ENCODE measurements at regions of chr11 and their contacts with region 1.

Region 1: GRCh38 chr11:9384535-9385303 is at the start of gene IPO7:
- DNase-seq: peak; percentile 93
- H3K4me3 Mint-ChIP-seq: peak within 1 kb of the TSS; percentile 92
- H3K27ac Mint-ChIP-seq: peak within 1 kb of the TSS; percentile 95
- H3K4me1 Mint-ChIP-seq: peaks cover 30% of the 10 kb centered on the region
- H3K27me3 Mint-ChIP-seq: no peaks in the 10 kb centered on the region
- total RNA-seq, gene IPO7: 95.9 to 107 TPM

Region 2: DNA sequence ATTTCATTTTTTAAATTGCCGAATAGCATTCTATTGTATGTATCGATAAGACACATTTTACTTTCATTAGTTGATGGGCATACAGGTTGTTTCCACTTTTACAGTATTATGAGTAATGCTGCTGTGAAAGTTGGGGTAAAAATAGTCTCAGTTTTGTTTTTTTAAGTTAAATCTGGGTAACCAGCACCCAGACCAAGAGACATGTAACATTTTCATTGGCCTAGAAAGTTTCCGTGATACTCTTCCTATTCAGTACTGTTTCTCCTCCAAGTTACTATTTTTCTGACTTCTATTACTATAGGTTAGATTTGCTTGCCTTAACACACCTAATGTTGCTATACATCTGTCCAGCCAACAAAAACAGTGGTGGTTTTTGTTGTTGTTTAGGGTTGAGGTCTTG is 12.0 kb after region 1 on chr11:
- CTCF ChIA-PET with region 1: interaction called, 13 read pairs
- POLR2A ChIA-PET with region 1: no interaction called
- DNase-seq: no peak
- H3K4me3 Mint-ChIP-seq: no peak overlapping the region
- H3K27ac Mint-ChIP-seq: no peak overlapping the region
- H3K4me1 Mint-ChIP-seq: peaks cover 55% of the 10 kb centered on the region
- H3K27me3 Mint-ChIP-seq: no peaks in the 10 kb centered on the region